ENCODE measurements at regions of chr17 and their contacts with region 1.

Region 1: DNA sequence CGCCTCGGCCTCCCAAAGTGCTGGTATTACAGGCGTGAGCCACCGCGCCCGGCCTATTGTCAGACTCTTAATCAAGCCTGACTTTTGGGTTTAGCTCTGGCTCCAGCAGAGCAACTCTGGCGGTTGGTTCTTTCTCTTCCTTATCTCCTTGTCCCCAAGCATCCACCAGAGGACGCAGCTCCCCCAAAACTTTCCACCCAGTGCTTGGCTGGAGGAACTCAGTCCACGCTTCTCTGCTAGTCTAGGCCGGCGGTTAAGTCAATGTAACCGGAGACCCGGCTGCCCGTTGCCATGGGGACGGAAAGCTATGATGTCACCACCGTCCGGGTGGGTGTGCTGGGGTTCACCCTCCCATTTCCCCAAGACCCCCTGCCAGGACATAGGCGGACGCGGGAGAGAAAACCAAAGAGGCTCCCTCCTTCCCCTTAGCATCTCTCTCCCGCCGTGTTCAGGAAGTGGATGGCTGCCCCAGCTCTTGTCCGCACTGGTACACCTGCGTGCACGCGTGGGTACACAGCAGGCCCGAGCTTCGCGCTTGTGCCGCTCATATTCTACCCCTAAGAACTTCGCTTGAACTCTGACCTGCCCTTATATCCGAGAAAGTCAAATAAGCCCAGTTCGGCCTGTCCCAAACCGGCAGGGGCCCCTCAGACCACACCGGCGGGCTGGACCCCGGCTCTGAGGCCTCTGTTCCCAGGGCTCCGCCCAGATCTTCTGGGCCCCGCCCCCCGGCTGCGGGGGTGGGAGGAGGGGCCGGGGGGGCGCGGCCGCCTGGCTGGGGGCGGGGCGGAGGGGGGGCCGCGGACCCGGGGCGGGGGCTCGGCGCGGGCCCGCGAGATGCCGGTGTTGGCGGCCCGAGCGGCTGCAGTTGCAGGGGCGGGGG is at the start of gene RND2:
- DNase-seq: peak; percentile 97
- H3K4me3 ChIP-seq: peak within 1 kb of the TSS; percentile 61 to 67 (median 63)
- H3K27ac ChIP-seq: peak within 1 kb of the TSS; percentile 81 to 87 (median 83)
- H3K4me1 ChIP-seq: peaks cover 18 to 43% (median 39%) of the 10 kb centered on the region in 4 donors
- H3K27me3 ChIP-seq: no peaks in the 10 kb centered on the region
- CTCF ChIP-seq: peak; percentile 72 to 86 (median 85)
- EP300 ChIP-seq: no peak
- POLR2A ChIP-seq: no peak
- total RNA-seq, gene RND2: 2.7 to 3.2 (median 2.8) TPM

Region 2: GRCh38 chr17:42985225-42985624 is 39.4 kb before region 1 on chr17:
- intact Hi-C with region 1: no loop called
- DNase-seq: no peak
- H3K4me3 ChIP-seq: no peak overlapping the region
- H3K27ac ChIP-seq: peak overlapping the region in 1 of 4 donors; percentile 16
- H3K4me1 ChIP-seq: peaks cover 9 to 32% (median 24%) of the 10 kb centered on the region in 4 donors
- H3K27me3 ChIP-seq: no peaks in the 10 kb centered on the region
- CTCF ChIP-seq: no peak
- EP300 ChIP-seq: no peak
- POLR2A ChIP-seq: no peak

Region 3: GRCh38 chr17:43068570-43069367 is 44.1 kb after region 1 on chr17:
- intact Hi-C with region 1: no loop called
- DNase-seq: no peak
- H3K4me3 ChIP-seq: no peak overlapping the region
- H3K27ac ChIP-seq: no peak overlapping the region
- H3K4me1 ChIP-seq: no peaks in the 10 kb centered on the region
- H3K27me3 ChIP-seq: no peaks in the 10 kb centered on the region
- CTCF ChIP-seq: no peak
- EP300 ChIP-seq: no peak
- POLR2A ChIP-seq: no peak

Region 4: GRCh38 chr17:43114151-43114552 is 89.5 kb after region 1 on chr17:
- intact Hi-C with region 1: no loop called
- DNase-seq: no peak
- H3K4me3 ChIP-seq: no peak overlapping the region
- H3K27ac ChIP-seq: no peak overlapping the region
- H3K4me1 ChIP-seq: no peaks in the 10 kb centered on the region
- H3K27me3 ChIP-seq: no peaks in the 10 kb centered on the region
- CTCF ChIP-seq: no peak
- EP300 ChIP-seq: no peak
- POLR2A ChIP-seq: no peak

Region 5: DNA sequence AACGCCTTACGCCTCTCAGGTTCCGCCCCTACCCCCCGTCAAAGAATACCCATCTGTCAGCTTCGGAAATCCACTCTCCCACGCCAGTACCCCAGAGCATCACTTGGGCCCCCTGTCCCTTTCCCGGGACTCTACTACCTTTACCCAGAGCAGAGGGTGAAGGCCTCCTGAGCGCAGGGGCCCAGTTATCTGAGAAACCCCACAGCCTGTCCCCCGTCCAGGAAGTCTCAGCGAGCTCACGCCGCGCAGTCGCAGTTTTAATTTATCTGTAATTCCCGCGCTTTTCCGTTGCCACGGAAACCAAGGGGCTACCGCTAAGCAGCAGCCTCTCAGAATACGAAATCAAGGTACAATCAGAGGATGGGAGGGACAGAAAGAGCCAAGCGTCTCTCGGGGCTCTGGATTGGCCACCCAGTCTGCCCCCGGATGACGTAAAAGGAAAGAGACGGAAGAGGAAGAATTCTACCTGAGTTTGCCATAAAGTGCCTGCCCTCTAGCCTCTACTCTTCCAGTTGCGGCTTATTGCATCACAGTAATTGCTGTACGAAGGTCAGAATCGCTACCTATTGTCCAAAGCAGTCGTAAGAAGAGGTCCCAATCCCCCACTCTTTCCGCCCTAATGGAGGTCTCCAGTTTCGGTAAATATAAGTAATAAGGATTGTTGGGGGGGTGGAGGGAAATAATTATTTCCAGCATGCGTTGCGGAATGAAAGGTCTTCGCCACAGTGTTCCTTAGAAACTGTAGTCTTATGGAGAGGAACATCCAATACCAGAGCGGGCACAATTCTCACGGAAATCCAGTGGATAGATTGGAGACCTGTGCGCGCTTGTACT is 100.7 kb after region 1 on chr17 and contains the start of gene BRCA1:
- intact Hi-C with region 1: loop called (anchors 2 kb)
- DNase-seq: peak; percentile 97
- H3K4me3 ChIP-seq: peak within 1 kb of the TSS; percentile 59 to 82 (median 68)
- H3K27ac ChIP-seq: peak within 1 kb of the TSS; percentile 68 to 89 (median 85)
- H3K4me1 ChIP-seq: peaks cover 14 to 44% (median 35%) of the 10 kb centered on the region in 4 donors
- H3K27me3 ChIP-seq: no peaks in the 10 kb centered on the region
- CTCF ChIP-seq: peak in 1 of 3 experiments; percentile 35
- EP300 ChIP-seq: no peak
- POLR2A ChIP-seq: no peak
- total RNA-seq, gene BRCA1: 3.1 to 7.6 (median 4.7) TPM

Measured in esophagus muscularis mucosa (tissue), 4 donors.